CD8-positive, alpha-beta T cell (primary cell): ENCODE measurements at regions of chr5 and their contacts with region 1.

Region 1: DNA sequence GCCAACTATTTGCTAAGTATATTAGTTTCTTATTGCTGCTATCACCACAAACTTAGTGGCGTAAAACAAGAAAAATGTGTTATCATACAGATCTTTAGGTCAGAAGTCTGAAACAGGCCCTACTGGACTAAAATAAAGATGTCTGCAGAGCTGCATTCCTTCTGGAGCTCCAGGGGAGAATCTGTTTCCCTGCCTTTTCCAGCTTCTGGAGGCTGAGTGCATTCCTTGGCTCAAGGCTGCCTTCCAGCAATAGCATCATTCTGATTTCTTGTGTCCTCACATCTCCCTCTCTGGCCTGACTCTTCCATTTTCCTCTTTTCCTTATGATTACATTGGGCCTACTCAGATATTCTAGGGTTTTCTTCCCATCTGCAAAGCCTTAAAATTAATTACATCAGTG is 15.9 kb downstream of the MAN2A1 start:
- DNase-seq: no peak
- ATAC-seq: no peak
- H3K4me3 ChIP-seq: no peak overlapping the region
- H3K4me3 Mint-ChIP-seq: no peak overlapping the region
- H3K27ac ChIP-seq: no peak overlapping the region
- H3K27ac Mint-ChIP-seq: no peak overlapping the region
- H3K4me1 ChIP-seq: peaks cover 70% of the 10 kb centered on the region
- H3K4me1 Mint-ChIP-seq: peaks cover 95% of the 10 kb centered on the region
- H3K27me3 ChIP-seq: no peaks in the 10 kb centered on the region
- H3K27me3 Mint-ChIP-seq: no peaks in the 10 kb centered on the region
- CTCF ChIP-seq: no peak

Region 2: DNA sequence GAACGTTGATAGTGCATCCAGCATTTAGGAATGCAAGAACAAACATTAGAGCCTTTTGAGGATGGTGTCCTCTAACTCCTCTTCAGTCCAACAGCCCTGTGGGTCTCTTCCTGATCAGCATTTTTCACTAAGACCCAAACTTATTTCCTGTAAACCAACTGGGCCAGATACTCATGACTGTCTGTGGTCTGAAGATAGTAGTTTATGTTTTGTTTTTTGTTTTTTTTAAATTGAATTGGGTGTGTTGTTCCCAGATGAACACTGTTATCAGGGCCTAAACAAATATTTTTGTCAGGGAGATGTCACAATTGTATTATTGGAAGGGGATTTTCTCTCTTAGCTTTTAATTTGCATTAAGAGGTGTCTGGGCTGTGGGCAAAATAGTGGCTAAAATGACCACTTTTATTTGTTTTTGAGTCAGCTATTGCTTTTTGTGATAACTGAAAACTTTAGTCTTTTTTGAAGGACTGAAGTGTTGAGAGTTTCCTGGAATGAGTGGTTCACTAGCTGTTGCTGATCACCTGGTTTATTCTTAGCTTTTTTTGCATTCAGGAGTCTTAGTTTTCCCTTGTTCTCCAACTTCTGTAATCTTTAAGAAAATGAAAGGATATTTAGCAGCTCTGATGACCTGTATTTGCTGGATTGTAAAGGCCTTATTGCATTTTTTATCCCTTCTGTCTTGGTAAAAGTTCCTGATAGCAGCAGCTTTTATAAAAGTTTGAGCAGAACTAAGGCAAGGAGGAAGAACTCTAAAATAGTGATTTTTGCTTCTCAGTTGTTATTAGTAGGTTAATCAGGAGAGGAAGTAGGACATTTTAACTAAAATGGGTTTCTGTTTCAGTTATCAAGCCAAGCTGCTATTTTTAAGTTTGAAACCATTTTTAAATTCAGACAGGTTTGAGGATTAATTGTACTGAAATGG is 10.3 kb before region 1 on chr5:
- CTCF ChIA-PET with region 1: interaction called, 7 read pairs
- POLR2A ChIA-PET with region 1: interaction called, 12 read pairs
- intact Hi-C with region 1: loop called (anchors 1 kb)
- DNase-seq: peak in 1 of 9 experiments; percentile 21
- ATAC-seq: no peak
- H3K4me3 ChIP-seq: no peak overlapping the region
- H3K4me3 Mint-ChIP-seq: peak overlapping the region; percentile 87
- H3K27ac ChIP-seq: peak overlapping the region in 1 of 2 experiments; percentile 47
- H3K27ac Mint-ChIP-seq: peak overlapping the region; percentile 28
- H3K4me1 ChIP-seq: peaks cover 73% of the 10 kb centered on the region
- H3K4me1 Mint-ChIP-seq: peaks cover 89% of the 10 kb centered on the region
- H3K27me3 ChIP-seq: no peaks in the 10 kb centered on the region
- H3K27me3 Mint-ChIP-seq: no peaks in the 10 kb centered on the region
- CTCF ChIP-seq: no peak

Region 3: DNA sequence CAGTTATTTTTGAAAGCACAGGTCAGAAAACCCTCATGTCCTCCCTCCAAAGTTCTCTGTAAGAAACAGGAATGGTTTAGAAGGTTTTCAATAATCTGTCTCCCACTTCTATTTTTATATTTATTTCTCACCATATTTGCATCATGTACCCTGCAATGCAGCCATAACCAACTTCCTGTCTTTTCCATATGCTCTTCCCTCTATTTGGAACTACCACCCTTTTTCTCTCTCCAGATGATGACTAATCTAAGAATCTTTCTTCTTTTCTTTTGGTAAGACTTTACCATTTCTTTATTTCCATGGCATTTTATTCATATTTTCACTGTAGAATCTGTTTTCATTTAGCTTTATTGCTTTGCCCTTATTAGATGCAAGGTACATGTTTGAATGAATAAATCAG is 18.0 kb after region 1 on chr5:
- CTCF ChIA-PET with region 1: no interaction called
- POLR2A ChIA-PET with region 1: interaction called, 3 read pairs
- intact Hi-C with region 1: loop called in 1 of 2 experiments (anchors 2 kb)
- DNase-seq: no peak
- ATAC-seq: no peak
- H3K4me3 ChIP-seq: no peak overlapping the region
- H3K4me3 Mint-ChIP-seq: no peak overlapping the region
- H3K27ac ChIP-seq: no peak overlapping the region
- H3K27ac Mint-ChIP-seq: no peak overlapping the region
- H3K4me1 ChIP-seq: no peaks in the 10 kb centered on the region
- H3K4me1 Mint-ChIP-seq: peaks cover 47% of the 10 kb centered on the region
- H3K27me3 ChIP-seq: no peaks in the 10 kb centered on the region
- H3K27me3 Mint-ChIP-seq: no peaks in the 10 kb centered on the region
- CTCF ChIP-seq: no peak